Sigmoid colon (tissue), 7 donors: ENCODE measurements at regions of chr7 and their contacts with region 1.

Region 1: GRCh38 chr7:114026486-114027089 is 107.8 kb upstream of the PPP1R3A start:
- DNase-seq: no peak
- H3K4me3 ChIP-seq: no peak overlapping the region
- H3K27ac ChIP-seq: no peak overlapping the region
- H3K4me1 ChIP-seq: no peaks in the 10 kb centered on the region
- H3K27me3 ChIP-seq: no peaks in the 10 kb centered on the region
- CTCF ChIP-seq: peak; percentile 13 to 56 (median 41)
- EP300 ChIP-seq: no peak
- POLR2A ChIP-seq: no peak

Region 2: DNA sequence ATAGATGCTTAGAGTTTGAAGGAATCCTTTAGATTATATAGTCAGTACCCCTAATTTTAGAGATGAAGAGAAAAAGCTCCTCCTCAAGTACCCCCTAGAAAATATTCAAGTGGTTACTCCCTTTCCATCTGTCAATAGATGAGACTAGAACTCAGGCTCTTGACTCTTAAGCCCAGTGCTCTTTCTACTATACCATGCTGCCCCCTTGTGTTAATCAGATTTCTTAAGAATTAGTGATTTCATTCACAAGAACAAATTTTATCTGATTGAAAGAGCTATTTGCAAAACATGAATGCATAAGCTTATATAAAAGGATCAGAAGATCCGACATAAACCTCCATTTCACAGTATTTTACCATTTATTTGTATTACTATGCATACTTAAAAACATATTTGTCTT is 1824.7 kb after region 1 on chr7:
- intact Hi-C with region 1: loop called (anchors 10 kb)
- DNase-seq: no peak
- H3K4me3 ChIP-seq: no peak overlapping the region
- H3K27ac ChIP-seq: no peak overlapping the region
- H3K4me1 ChIP-seq: no peaks in the 10 kb centered on the region
- H3K27me3 ChIP-seq: no peaks in the 10 kb centered on the region
- CTCF ChIP-seq: peak in 2 of 4 experiments; percentile 17 to 38
- EP300 ChIP-seq: no peak
- POLR2A ChIP-seq: no peak